ENCODE measurements at regions of chr19 and their contacts with region 1.

Region 1: DNA sequence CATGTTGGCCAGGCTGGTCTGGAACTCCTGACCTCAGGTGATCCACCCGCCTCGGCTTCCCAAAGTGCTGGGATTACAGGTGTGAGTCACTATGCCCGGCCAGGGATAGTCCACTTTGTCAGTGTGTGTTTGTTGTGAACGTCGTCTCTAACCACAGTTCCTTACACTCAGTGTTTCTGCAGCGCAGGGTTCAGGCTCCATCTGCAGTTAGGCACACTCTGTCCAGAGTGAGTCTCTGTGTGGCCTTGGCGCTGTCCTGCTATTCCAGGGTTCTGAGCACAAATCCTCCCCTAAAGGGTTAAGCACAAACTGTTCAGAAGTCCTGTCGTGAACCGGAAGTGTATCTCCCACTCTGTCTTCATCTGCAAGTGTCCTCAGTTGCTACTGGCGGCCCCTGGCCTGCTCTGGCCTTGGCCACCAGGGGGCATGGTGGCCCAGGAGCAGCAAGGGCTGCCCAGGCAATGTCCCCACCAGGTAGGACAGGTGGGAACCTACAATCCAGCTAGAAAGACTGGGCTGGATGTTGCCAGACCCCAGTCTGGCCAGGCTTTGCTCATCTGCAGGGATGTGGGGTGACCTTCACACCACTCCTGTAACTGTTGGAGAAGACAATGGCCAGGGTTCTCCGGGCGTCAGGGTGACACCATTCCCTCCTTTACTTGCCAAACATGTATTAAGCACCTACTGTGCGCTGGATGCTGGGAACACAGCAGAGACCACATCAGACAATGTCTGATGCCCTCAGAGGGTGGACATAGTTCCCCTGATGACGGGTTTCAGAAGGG is 38.7 kb upstream of the GATAD2A start:
- DNase-seq: no peak
- ATAC-seq: peak; percentile 93
- H3K4me3 ChIP-seq: peak overlapping the region in 1 of 2 experiments; percentile 11; a peak in 1 of 4 replicates
- H3K27ac ChIP-seq: peak overlapping the region; percentile 34; the same call in 1 of the 2 replicates
- H3K4me1 ChIP-seq: no peaks in the 10 kb centered on the region
- H3K27me3 ChIP-seq: no peaks in the 10 kb centered on the region
- CTCF ChIP-seq: peak; percentile 92

Region 2: DNA sequence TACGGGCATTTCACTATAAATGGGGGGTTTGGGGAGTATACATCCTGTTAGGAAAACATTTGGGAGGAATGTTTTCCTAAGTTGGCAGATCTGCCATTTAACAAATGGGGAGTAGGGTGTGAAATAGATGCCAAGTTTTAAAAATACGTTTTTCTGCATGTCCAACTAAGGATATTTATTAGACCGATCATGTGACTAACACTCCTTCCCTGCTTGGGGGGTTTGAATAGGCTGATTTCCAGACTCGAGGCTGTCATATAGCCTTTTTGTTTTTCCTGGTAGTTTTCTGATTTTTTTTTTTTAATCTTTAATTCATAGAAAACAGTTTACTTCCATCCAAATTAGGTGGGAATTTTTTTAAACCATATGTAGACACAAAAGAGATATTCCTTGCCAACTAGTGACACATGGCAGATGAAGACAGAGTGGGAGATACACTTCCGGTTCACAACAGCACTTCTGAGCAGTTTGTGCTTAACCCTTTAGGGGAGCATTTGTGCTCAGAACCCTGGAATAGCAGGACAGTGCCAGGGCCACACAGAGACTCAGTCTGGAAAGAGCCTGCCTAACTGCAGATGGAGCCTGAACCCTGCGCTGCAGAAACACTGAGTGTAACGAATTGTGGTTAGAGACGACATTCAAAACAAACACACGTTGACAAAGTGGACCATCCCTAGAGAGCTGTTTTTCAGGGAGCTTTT is 33.1 kb after region 1 on chr19:
- CTCF ChIA-PET with region 1: no interaction called
- POLR2A ChIA-PET with region 1: no interaction called
- in situ Hi-C with region 1: no loop called
- intact Hi-C with region 1: no loop called
- DNase-seq: no peak
- ATAC-seq: peak; percentile 58; the same call in 1 of the 2 replicates
- H3K4me3 ChIP-seq: no peak overlapping the region
- H3K27ac ChIP-seq: peak overlapping the region; percentile 54; the same call in 1 of the 2 replicates
- H3K4me1 ChIP-seq: peaks cover 19% of the 10 kb centered on the region
- H3K27me3 ChIP-seq: no peaks in the 10 kb centered on the region
- CTCF ChIP-seq: no peak

Region 3: GRCh38 chr19:19488875-19489690 is 122.3 kb after region 1 on chr19:
- CTCF ChIA-PET with region 1: interaction called, 4 read pairs
- POLR2A ChIA-PET with region 1: no interaction called
- in situ Hi-C with region 1: no loop called
- intact Hi-C with region 1: loop called (anchors 5 kb)
- DNase-seq: peak; percentile 64
- ATAC-seq: peak; percentile 60
- H3K4me3 ChIP-seq: peak overlapping the region in 1 of 2 experiments; percentile 37; a peak in 2 of 4 replicates
- H3K27ac ChIP-seq: peak overlapping the region; percentile 79
- H3K4me1 ChIP-seq: peaks cover 41% of the 10 kb centered on the region
- H3K27me3 ChIP-seq: no peaks in the 10 kb centered on the region
- CTCF ChIP-seq: no peak